ENCODE measurements at regions of chr14 and their contacts with region 1.

Region 1: DNA sequence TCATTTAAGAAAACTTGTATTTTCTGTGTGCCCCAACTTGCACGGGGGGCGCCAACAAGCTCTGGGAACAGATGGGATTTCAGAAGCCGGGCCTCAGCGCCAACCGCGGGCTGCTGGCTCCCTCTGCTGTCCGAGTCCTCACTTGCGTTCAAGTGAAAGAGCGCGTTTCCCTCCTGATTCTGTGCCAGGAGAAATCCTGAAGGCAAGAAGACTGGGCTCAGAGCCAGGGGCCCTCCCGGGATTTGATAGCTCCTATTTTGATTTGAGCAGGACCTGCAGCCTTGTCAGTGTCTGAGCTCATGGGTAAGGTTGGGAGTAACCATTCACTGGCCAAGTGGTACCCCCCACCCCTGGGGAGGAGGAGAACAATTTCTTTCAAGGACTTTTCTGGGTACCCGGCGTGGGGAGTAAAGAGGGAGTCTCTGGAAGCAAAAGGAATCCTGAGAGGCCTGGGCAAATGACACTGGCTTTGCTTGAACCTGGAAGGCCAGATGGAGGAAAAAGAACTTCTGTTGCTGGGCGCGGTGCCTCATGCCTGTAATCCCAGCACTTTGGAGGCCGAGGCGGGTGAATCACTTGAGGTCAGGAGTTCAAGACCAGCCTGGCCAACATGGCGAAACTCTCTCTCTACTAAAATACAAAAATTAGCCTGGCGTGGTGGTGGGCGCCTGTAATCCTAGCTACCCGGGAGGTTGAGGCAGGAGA is 179.0 kb upstream of the RGS6 start:
- DNase-seq: peak; percentile 81 to 89
- H3K4me3 ChIP-seq: no peak overlapping the region
- H3K27ac ChIP-seq: no peak overlapping the region
- H3K4me1 ChIP-seq: peaks cover 0 to 6% (median 4%) of the 10 kb centered on the region in 4 experiments; a peak in 3 of 7 replicates
- H3K27me3 ChIP-seq: no peaks in the 10 kb centered on the region
- CTCF ChIP-seq: peak; percentile 87 to 99 (median 88)
- EP300 ChIP-seq: no peak
- POLR2A ChIP-seq: no peak
- RAD21 ChIP-seq: peak; percentile 100

Region 2: DNA sequence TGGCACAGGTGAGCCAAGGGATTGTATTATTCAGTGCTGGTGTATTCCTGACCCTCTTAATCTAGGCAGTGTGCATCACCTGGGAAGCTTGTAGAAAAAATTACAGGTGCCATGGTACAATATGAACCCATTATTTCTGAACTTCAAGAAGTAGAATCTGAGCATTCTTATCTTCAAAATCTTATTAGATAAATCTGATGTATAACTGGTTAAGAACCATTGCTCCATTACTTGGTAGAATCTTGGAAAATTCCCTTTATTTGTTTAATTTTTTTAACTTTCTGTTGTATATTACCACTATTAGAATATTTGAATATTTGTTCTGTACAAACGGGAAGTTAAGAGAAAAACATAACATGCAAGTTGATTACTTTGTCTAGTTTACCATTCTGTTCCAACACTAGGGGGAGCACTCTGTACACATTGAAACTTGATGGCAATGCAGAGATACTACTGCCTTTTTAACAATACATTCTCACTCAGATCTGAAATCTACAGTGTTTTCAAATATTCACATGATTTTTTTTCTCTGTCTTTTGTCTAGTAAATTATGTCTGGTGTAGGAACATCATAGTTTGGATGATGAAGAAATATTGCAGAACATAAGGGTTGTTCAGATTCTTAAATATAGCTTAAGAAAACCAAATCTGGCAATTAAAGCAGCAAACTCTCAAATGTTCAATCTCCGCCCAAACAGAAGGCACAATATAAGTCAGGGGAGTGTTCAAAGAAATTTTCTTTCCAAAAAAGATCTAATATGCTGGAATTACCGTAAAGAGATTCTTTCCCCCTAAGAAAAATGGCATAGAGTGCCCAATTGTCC is 649.4 kb before region 1 on chr14:
- CTCF ChIA-PET with region 1: interaction called, 10 read pairs
- POLR2A ChIA-PET with region 1: no interaction called
- DNase-seq: no peak
- H3K4me3 ChIP-seq: no peak overlapping the region
- H3K27ac ChIP-seq: no peak overlapping the region
- H3K4me1 ChIP-seq: no peaks in the 10 kb centered on the region
- H3K27me3 ChIP-seq: no peaks in the 10 kb centered on the region
- CTCF ChIP-seq: peak in 2 of 3 experiments; percentile 40 to 67; a peak in 2 of 4 replicates
- EP300 ChIP-seq: no peak
- POLR2A ChIP-seq: no peak
- RAD21 ChIP-seq: peak; percentile 66

Region 3: DNA sequence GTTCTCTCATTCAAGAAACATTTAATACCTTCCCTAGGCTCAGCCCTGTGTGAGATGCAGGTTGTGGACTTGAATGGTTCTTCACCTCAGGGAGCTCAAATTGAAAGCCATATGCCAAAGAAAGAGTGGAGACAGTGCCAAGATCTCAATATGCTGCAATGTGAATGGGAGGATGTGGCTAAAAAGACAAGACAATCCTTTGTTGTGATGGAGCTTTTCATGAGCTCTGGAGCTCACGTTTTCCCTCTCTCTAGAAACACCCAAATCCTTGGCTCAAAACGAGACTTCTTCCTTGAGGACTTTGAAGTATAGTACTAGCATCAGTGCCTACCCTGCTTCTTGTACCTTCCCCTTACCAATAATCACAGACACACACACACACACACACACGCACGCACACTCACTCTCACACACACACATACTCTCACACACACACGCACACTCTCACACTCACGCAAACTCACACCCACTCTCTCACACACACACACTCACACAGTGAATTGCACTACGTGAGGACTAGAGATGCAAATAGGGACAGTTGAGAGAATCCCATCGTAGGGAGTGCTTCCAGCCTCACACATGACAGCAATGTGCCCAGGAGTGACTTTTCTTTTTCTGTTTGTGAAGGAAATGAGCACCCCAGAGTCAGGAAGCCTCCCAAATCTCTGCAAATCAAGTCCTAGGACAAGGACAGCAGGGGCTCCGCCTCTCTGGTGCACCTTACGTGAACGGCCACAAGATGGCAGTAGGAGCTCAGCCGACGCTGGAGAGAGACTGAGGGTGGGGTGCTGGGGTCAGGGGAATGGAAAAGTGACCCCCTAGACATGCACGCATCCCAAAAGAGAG is 614.6 kb before region 1 on chr14:
- CTCF ChIA-PET with region 1: interaction called, 86 read pairs
- POLR2A ChIA-PET with region 1: no interaction called
- DNase-seq: peak; percentile 23 to 83
- H3K4me3 ChIP-seq: no peak overlapping the region
- H3K27ac ChIP-seq: no peak overlapping the region
- H3K4me1 ChIP-seq: peaks cover 0 to 5% (median 0%) of the 10 kb centered on the region in 4 experiments; a peak in 3 of 7 replicates
- H3K27me3 ChIP-seq: no peaks in the 10 kb centered on the region
- CTCF ChIP-seq: peak; percentile 90 to 95 (median 91)
- EP300 ChIP-seq: no peak
- POLR2A ChIP-seq: no peak
- RAD21 ChIP-seq: peak; percentile 98 to 99

Region 4: DNA sequence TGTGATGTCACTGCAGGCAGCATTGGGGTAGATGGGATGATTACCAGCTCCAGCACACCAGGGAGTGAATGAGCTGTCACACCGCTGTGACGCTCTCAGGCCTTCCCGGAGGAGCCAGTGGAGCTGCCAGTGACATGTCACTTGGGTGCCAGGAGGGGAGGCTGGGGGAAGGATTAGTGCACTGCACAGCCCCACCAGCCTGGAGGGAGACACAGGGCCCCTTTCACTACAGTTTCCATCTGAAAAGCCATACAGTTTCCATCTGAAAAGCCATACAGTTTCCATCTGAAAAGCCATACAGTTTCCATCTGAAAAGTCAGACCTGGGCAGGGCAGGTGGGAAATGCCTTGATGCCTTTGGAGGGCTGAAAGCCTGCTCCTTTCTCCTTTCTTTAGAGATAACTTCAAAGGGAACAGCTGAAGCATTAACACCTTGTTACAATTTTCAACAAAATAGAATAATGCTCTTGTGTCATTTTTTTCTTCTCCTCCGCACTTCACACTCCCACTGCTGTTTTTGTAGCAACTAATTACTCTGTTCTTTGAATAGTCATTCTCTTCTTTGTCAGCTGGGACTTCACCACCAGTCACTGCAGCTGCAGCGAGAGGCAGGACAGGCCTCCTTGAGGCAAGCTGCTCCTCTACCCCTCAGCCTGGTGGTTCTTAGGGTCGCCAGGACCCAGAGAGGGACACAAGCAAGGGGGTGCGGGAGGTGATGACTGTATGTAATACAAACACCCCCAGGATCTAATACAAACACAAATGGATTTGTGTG is 78.0 kb before region 1 on chr14:
- CTCF ChIA-PET with region 1: no interaction called
- POLR2A ChIA-PET with region 1: no interaction called
- DNase-seq: peak; percentile 65 to 76
- H3K4me3 ChIP-seq: no peak overlapping the region
- H3K27ac ChIP-seq: no peak overlapping the region; the same call in 1 of the 2 replicates
- H3K4me1 ChIP-seq: peaks cover 0 to 6% (median under 1%) of the 10 kb centered on the region in 4 experiments; a peak in 4 of 7 replicates
- H3K27me3 ChIP-seq: no peaks in the 10 kb centered on the region
- CTCF ChIP-seq: no peak
- EP300 ChIP-seq: no peak
- POLR2A ChIP-seq: no peak
- RAD21 ChIP-seq: peak in 1 of 2 experiments; percentile 6; a peak in 1 of 4 replicates

Region 5: DNA sequence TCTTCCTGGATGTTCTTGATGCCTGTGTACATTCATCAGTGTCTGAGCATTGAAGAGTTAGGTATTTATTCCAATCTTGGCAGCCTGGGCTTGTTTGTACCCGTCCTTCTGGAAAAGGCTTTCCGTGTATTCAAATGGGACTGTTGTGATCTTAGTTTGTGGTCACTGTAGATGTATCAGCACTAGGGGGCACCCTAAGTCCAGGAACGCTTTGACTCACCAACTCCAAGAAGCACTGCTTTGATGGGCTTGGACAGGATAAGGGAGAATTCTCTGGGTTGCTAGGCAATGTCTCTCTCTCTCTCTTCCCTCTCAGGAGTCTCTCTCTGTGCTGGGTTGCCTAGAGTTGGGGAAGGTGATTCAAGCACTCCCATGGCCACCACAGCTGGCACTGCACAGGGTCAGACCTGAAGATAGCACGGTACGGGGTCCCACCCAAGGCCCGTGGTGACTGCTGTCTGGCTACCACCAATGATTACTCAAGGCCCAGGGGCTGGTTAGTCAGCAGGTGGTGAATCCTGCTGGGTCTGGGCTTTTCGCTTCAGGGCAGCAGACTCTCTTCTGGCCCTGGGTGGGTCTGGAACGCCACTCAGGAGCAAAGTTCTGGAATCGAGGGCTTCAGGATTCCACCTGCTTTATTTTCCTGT is 32.2 kb before region 1 on chr14:
- CTCF ChIA-PET with region 1: interaction called, 32 read pairs
- POLR2A ChIA-PET with region 1: no interaction called
- DNase-seq: peak; percentile 38 to 64
- H3K4me3 ChIP-seq: no peak overlapping the region
- H3K27ac ChIP-seq: no peak overlapping the region
- H3K4me1 ChIP-seq: no peaks in the 10 kb centered on the region
- H3K27me3 ChIP-seq: no peaks in the 10 kb centered on the region
- CTCF ChIP-seq: peak; percentile 42 to 75 (median 73)
- EP300 ChIP-seq: no peak
- POLR2A ChIP-seq: no peak
- RAD21 ChIP-seq: peak; percentile 89 to 92

Region 6: GRCh38 chr14:71739273-71739937 is 13.9 kb before region 1 on chr14:
- CTCF ChIA-PET with region 1: interaction called, 33 read pairs
- POLR2A ChIA-PET with region 1: interaction called, 4 read pairs
- DNase-seq: no peak
- H3K4me3 ChIP-seq: no peak overlapping the region
- H3K27ac ChIP-seq: no peak overlapping the region
- H3K4me1 ChIP-seq: no peaks in the 10 kb centered on the region
- H3K27me3 ChIP-seq: no peaks in the 10 kb centered on the region
- CTCF ChIP-seq: no peak
- EP300 ChIP-seq: no peak
- POLR2A ChIP-seq: no peak
- RAD21 ChIP-seq: no peak

Region 7: DNA sequence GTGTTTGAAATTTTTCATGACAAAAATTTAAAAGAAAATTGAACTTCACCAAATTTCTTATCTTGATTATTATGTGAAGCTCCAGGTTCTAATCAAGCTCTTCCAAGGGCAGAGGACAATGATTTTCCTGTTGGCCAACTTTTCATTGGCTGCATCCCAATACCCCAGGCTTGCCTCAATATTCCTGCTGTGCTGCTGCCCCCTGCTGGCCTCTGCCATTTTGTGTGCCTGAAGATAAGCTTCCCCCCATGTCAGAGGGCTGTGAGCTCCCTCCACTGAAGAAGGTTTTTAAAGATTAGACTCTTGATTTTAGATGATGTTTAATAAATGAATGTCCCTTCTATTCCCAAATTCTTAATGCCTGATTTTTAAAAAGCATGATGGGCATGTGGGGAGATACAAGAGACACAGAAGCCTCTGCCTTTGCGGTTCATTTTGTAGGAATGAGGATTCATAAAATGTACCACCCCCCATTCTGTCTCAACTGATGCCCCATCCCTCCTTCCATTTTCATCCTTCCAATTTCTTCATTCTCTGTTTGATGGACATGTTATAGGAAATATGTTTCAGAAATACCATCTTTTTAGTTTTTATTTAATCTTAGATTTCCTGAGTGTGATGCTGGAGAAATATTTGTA is 102.2 kb after region 1 on chr14:
- CTCF ChIA-PET with region 1: interaction called, 27 read pairs
- POLR2A ChIA-PET with region 1: no interaction called
- DNase-seq: peak; percentile 43 to 92
- H3K4me3 ChIP-seq: no peak overlapping the region
- H3K27ac ChIP-seq: no peak overlapping the region
- H3K4me1 ChIP-seq: no peaks in the 10 kb centered on the region
- H3K27me3 ChIP-seq: no peaks in the 10 kb centered on the region
- CTCF ChIP-seq: peak; percentile 81 to 82 (median 81)
- EP300 ChIP-seq: no peak; a peak in 1 of 3 replicates
- POLR2A ChIP-seq: no peak
- RAD21 ChIP-seq: peak; percentile 90 to 94